SK-N-SH (cell line): ENCODE measurements at regions of chr22 and their contacts with region 1.

Region 1: DNA sequence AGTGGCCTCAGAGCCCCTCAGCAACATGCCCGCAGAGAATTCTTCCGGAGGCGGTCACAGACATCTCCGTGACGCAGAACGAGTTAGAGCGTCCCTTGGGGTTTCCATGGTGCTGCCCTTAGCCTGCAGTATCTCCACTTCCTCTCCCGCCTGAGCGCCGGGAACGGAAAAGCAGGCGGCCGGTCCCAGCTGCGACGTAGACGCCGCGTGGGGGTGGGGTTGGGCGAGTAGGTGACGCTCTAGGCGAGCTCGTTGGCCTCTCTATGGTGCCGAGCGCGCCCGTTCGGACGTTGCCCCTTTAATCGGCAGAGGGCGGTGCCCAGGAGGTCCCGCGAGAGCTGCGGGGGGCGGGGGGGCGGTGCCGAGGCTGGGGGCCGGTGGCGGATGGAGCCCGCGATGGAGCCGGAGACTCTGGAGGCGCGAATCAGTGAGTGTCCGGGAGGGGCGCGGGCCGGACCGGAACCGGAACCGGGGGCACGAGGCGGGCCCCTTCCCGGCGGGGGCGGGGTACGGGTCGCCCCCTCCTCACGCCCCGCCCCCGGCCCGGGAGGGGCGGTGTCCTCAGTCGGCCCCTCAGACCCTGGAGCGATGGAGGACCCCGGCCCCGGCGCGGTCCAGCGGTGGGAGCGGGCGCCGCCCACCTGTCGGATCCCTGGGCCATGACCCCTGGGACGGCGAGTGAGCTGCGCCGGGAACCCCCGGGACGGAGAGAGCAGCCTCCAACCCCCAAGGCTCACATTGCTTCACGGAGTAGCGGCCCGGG is at the start of gene GGA1:
- DNase-seq: peak; percentile 97
- H3K4me3 ChIP-seq: peak within 1 kb of the TSS; percentile 86 to 91
- H3K27ac ChIP-seq: peak within 1 kb of the TSS; percentile 92 to 98
- H3K4me1 ChIP-seq: peaks cover 7 to 26% of the 10 kb centered on the region in 2 experiments; a peak in 1 of 4 replicates
- H3K27me3 ChIP-seq: no peaks in the 10 kb centered on the region
- CTCF ChIP-seq: no peak
- EP300 ChIP-seq: no peak; a peak in 1 of 4 replicates
- RAD21 ChIP-seq: no peak
- polyA plus RNA-seq, gene GGA1: 81.1 and 99.4 TPM in 2 replicates

Region 2: GRCh38 chr22:37561212-37562048 is 47.2 kb before region 1 on chr22:
- CTCF ChIA-PET with region 1: interaction called, 30 read pairs
- POLR2A ChIA-PET with region 1: no interaction called
- DNase-seq: peak; percentile 94
- H3K4me3 ChIP-seq: peak overlapping the region; percentile 56 to 75
- H3K27ac ChIP-seq: peak overlapping the region in 1 of 2 experiments; percentile 96; a peak in 2 of 4 replicates
- H3K4me1 ChIP-seq: peaks cover 10 to 28% of the 10 kb centered on the region in 2 experiments; a peak in 3 of 4 replicates
- H3K27me3 ChIP-seq: no peaks in the 10 kb centered on the region
- CTCF ChIP-seq: peak; percentile 89
- EP300 ChIP-seq: no peak
- RAD21 ChIP-seq: peak; percentile 27; the same call in 1 of the 2 replicates

Region 3: GRCh38 chr22:37594237-37594636 is 14.4 kb before region 1 on chr22:
- CTCF ChIA-PET with region 1: interaction called, 95 read pairs
- POLR2A ChIA-PET with region 1: interaction called, 13 read pairs
- DNase-seq: no peak
- H3K4me3 ChIP-seq: no peak overlapping the region
- H3K27ac ChIP-seq: no peak overlapping the region
- H3K4me1 ChIP-seq: no peaks in the 10 kb centered on the region
- H3K27me3 ChIP-seq: no peaks in the 10 kb centered on the region; the same call in 1 of the 2 replicates
- CTCF ChIP-seq: no peak
- EP300 ChIP-seq: no peak
- RAD21 ChIP-seq: no peak

Region 4: GRCh38 chr22:37633625-37634416 is 25.2 kb after region 1 on chr22:
- CTCF ChIA-PET with region 1: interaction called, 25 read pairs
- POLR2A ChIA-PET with region 1: interaction called, 9 read pairs
- DNase-seq: peak; percentile 91
- H3K4me3 ChIP-seq: peak overlapping the region; percentile 2 to 7; a peak in 2 of 4 replicates
- H3K27ac ChIP-seq: peak overlapping the region; percentile 69 to 98
- H3K4me1 ChIP-seq: peaks cover 23 to 51% of the 10 kb centered on the region in 2 experiments
- H3K27me3 ChIP-seq: no peaks in the 10 kb centered on the region
- CTCF ChIP-seq: peak; percentile 41
- EP300 ChIP-seq: peak in 1 of 2 experiments; percentile 25; a peak in 1 of 4 replicates
- RAD21 ChIP-seq: no peak; the same call in 1 of the 2 replicates

Region 5: GRCh38 chr22:37676736-37677492 is 68.3 kb after region 1 on chr22:
- CTCF ChIA-PET with region 1: interaction called, 15 read pairs
- POLR2A ChIA-PET with region 1: interaction called, 4 read pairs
- DNase-seq: peak; percentile 91
- H3K4me3 ChIP-seq: peak overlapping the region; percentile 64 to 92
- H3K27ac ChIP-seq: peak overlapping the region; percentile 94
- H3K4me1 ChIP-seq: peaks cover 16 to 22% of the 10 kb centered on the region in 2 experiments; a peak in 2 of 4 replicates
- H3K27me3 ChIP-seq: no peaks in the 10 kb centered on the region
- CTCF ChIP-seq: no peak
- EP300 ChIP-seq: peak; percentile 49 to 84; a peak in 3 of 4 replicates
- RAD21 ChIP-seq: no peak